Vagina (tissue), 2 donors: ENCODE measurements at regions of chr10 and their contacts with region 1.

Region 1: GRCh38 chr10:122703439-122704118 is 3.9 kb upstream of the C10orf120 start:
- DNase-seq: no peak
- H3K4me3 ChIP-seq: no peak overlapping the region
- H3K27ac ChIP-seq: no peak overlapping the region
- H3K4me1 ChIP-seq: no peaks in the 10 kb centered on the region
- H3K27me3 ChIP-seq: no peaks in the 10 kb centered on the region
- CTCF ChIP-seq: peak in 2 of 3 experiments; percentile 15 to 36
- POLR2A ChIP-seq: no peak

Region 2: DNA sequence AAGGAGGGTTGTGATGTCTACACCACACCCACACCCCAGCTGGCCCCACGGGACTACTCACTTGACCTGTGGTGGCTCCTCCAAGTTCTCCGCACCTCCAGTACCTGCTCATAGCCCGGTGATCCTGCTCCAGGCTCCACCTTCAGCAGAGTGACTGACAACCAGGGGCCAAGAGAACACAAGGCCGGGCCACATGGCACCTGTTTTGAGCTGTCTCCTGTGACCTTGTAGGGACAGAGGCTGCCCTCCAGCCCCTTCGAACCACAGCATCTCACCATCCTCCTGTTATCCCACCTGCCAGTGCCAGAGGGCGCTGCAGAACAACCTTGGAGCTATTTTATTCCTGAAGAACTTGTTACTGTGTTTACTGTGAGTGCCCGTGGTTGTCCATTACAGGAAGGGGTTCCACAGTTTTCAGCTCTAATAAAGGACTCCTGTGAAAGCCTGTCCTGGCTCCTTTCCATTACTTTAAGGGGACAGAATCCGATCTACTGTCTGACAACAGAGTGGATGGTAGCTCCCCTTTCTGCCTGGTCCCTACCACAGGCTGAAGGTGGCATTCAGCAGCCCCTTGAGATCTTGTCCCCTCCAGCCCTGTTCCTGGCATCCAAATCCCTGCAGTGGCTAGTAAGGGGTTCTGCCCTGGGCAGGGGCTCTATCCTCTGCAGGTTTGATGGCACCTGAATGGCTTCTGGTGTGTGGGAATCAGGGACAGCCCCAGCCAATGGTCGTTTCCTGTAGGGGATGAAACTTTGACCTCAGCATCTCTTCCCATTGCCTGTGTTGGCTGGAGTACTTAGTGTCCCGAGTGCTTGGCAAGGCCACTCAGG is 54.8 kb before region 1 on chr10:
- intact Hi-C with region 1: loop called (anchors 10 kb)
- DNase-seq: no peak
- H3K4me3 ChIP-seq: no peak overlapping the region
- H3K27ac ChIP-seq: no peak overlapping the region
- H3K4me1 ChIP-seq: no peaks in the 10 kb centered on the region
- H3K27me3 ChIP-seq: no peaks in the 10 kb centered on the region
- CTCF ChIP-seq: peak in 1 of 3 experiments; percentile 25
- POLR2A ChIP-seq: no peak